OCI-LY7 (cell line): ENCODE measurements at regions of chr10 and their contacts with region 1.

Region 1: DNA sequence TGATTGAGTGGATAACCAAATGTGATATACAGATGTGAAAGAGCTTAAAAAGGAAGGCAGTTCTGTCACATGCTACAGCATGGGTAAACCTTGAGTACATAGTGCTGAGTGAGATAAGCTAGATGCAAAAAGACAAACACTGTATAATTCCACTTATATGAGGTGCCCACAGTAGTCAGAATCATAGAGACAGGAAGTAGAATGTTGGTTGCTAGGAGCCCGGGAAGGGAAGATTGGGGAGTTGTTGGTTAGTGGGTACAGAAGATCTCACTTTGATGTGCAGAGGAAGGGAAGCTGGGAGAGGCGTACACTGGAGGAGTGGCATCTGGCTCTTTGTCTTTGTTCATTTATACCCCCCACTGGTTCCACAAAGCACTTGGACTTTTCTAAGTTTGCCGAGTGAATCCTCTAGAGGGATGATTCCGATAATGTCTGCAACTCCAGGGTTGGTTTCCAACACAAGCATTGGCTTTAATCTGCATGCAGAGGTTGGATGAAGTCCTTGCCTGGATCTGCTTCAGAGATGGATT is 39.5 kb downstream of the TSPAN14 start:
- DNase-seq: no peak
- H3K4me3 ChIP-seq: no peak overlapping the region
- H3K27ac ChIP-seq: peak overlapping the region; percentile 4
- H3K4me1 ChIP-seq: peaks cover 33% of the 10 kb centered on the region
- CTCF ChIP-seq: no peak

Region 2: GRCh38 chr10:80472234-80473095 is 21.1 kb before region 1 on chr10:
- CTCF ChIA-PET with region 1: no interaction called
- POLR2A ChIA-PET with region 1: interaction called, 16 read pairs
- intact Hi-C with region 1: no loop called
- DNase-seq: peak; percentile 66
- H3K4me3 ChIP-seq: peak overlapping the region; percentile 44
- H3K27ac ChIP-seq: peak overlapping the region; percentile 86
- H3K4me1 ChIP-seq: peaks cover 80% of the 10 kb centered on the region
- CTCF ChIP-seq: peak; percentile 36; the same call in 1 of the 2 replicates

Region 3: DNA sequence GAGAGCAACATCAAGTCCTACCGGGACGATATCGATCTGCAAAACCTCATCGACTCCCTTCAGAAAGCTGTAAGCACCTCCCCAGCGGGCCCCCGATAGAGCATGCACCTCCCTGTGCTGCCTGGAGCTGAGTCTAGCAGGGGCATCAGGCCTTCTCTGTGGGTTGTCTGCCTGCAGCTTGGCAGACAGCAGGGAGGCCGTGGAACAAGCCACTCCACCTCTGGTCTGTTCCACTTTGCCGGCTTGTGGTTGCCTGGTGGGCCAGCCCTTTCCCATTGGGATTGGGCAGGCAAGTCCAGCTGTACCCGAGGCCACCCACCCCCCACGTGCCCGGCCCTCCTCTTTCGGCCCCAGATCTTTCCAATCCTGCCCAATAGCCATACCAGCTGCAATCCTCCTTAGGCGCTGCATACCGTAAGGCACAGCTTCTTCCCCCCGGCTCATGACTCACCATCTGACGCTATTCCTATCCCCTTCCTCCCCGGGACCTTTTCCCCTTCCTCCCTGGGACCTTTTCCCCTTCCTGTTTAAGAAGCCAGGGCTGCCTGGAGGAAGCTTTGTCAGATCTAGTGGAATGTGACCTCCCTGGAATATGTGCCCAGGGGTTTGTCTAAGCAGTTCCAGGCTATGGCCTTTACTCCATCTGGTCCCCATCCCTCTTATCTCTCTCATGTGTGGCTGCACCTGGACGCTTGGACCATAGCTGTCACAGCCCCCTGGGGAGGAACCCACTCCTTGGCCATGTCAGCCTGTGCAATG is 16.0 kb after region 1 on chr10:
- CTCF ChIA-PET with region 1: no interaction called
- POLR2A ChIA-PET with region 1: no interaction called
- intact Hi-C with region 1: no loop called
- DNase-seq: no peak
- H3K4me3 ChIP-seq: no peak overlapping the region
- H3K27ac ChIP-seq: no peak overlapping the region
- H3K4me1 ChIP-seq: no peaks in the 10 kb centered on the region
- CTCF ChIP-seq: no peak